OCI-LY7 (cell line): ENCODE measurements at regions of chr14 and their contacts with region 1.

Region 1: DNA sequence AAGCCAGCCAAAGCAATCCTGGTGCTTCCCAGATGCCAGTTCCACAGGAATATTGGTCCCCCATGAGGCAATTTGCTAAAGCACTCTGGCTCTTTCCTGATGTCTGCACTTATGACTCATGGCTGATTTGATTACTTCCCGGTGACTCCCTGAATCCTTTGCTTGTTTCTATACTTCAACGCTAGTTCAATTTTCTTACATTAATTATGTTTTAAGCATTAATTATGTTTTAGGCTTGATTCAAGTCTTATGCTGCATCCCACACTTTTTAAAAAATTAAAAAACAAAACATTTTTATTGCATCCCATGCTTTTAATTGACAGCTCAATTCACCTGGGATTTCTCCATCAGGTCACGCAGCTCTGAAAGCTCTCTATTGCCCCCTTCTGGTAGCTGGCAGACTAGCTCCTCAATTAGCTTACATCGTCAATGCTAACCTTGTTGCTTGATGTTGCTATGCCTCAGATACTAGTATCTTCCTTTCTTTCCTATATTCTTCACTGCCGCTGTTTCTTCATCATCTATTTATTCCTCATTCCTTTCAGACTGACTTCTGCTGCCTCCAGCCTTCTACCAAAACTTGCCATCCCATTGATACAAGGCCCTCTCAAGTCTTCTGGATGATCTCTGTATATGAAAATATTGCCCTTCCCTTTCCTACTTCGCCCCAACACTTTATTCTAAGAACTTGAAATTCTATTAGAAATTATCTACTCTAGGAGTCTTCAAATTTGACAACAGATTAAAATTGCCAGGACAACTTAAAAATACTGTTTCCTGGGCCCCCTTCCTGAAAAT is 32.0 kb downstream of the TSHR start:
- DNase-seq: peak; percentile 89
- H3K4me3 ChIP-seq: no peak overlapping the region
- H3K27ac ChIP-seq: peak overlapping the region; percentile 13
- H3K4me1 ChIP-seq: peaks cover 50% of the 10 kb centered on the region
- CTCF ChIP-seq: peak; percentile 98

Region 2: DNA sequence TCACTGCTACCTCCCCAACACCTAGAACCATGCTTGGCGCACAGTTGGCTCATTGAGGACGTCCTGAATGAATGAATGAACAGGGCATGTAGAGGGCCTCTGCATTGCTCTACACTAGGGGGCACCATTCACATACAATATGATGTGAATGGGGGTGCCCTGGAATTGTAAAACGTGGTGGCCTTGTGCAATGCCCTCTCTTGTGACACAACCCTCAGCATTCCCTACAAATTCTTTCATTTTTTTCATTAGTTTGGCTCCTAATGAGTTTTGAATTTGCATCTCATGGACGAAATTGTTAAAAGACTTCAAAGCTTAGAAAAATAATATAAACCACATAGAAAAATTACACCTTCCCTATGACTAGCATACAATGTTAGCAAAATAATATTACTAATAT is 773.8 kb before region 1 on chr14:
- CTCF ChIA-PET with region 1: no interaction called
- POLR2A ChIA-PET with region 1: no interaction called
- intact Hi-C with region 1: loop called (anchors 10 kb)
- DNase-seq: peak; percentile 49
- H3K4me3 ChIP-seq: no peak overlapping the region
- H3K27ac ChIP-seq: no peak overlapping the region
- H3K4me1 ChIP-seq: no peaks in the 10 kb centered on the region
- CTCF ChIP-seq: peak; percentile 76

Region 3: GRCh38 chr14:80850197-80850814 is 137.1 kb before region 1 on chr14:
- CTCF ChIA-PET with region 1: no interaction called
- POLR2A ChIA-PET with region 1: no interaction called
- intact Hi-C with region 1: loop called (anchors 10 kb)
- DNase-seq: peak; percentile 41
- H3K4me3 ChIP-seq: no peak overlapping the region
- H3K27ac ChIP-seq: no peak overlapping the region
- H3K4me1 ChIP-seq: no peaks in the 10 kb centered on the region
- CTCF ChIP-seq: peak; percentile 91

Region 4: GRCh38 chr14:80954687-80955299 is 32.6 kb before region 1 on chr14:
- CTCF ChIA-PET with region 1: interaction called, 30 read pairs
- POLR2A ChIA-PET with region 1: interaction called, 267 read pairs
- intact Hi-C with region 1: loop called (anchors 1 kb)
- DNase-seq: peak; percentile 88
- H3K4me3 ChIP-seq: peak overlapping the region; percentile 68
- H3K27ac ChIP-seq: peak overlapping the region; percentile 98
- H3K4me1 ChIP-seq: peaks cover 47% of the 10 kb centered on the region
- CTCF ChIP-seq: peak; percentile 94

Region 5: GRCh38 chr14:80973931-80974641 is 13.3 kb before region 1 on chr14:
- CTCF ChIA-PET with region 1: interaction called, 9 read pairs
- POLR2A ChIA-PET with region 1: interaction called, 15 read pairs
- intact Hi-C with region 1: no loop called
- DNase-seq: no peak
- H3K4me3 ChIP-seq: no peak overlapping the region
- H3K27ac ChIP-seq: no peak overlapping the region
- H3K4me1 ChIP-seq: peaks cover 53% of the 10 kb centered on the region
- CTCF ChIP-seq: no peak

Region 6: DNA sequence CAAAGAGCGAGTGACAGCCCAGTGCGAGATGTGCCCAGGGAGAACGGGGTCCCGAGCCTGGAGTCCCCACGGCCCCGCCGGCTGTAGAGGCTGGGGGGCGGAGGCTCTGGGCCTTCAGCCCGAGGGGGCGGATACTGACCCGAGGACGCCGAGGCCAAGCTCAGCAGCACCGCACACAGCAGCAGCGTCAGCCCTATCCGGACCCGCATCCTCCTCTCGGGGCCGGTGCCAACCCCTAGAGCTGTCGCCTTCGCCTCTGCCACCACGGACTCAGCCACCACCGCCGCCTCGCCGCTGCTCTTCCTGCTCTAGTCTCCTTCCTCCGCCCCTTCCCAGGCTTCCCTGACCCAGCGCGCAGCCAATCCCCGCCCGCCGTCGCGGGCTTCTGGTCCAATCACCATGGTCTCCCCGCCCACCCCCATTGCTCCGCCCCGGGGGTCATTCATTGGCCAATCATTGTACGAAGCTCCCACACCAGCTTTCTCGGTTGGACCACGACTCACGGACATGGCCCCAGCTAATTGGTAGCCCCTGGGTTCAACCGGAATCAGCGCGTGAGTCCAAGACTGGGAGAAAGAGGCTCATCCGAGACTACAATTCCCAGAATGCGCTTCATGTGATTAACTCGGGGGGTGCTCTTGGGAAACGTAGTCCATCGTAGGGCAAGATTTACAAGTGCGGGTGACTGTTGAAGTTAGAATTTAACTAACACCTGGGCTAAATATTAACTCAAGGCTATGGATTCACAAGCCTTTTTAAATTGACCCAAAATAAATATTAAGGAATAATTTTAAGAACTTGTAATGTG is 546.3 kb after region 1 on chr14 and contains the start of gene SEL1L:
- CTCF ChIA-PET with region 1: no interaction called
- POLR2A ChIA-PET with region 1: no interaction called
- intact Hi-C with region 1: loop called (anchors 5 kb)
- DNase-seq: peak; percentile 100
- H3K4me3 ChIP-seq: peak within 1 kb of the TSS; percentile 84
- H3K27ac ChIP-seq: no peak within 1 kb of the TSS
- H3K4me1 ChIP-seq: peaks cover 48% of the 10 kb centered on the region
- CTCF ChIP-seq: no peak
- total RNA-seq, gene SEL1L: 58.3 and 68.8 TPM in 2 replicates

Region 7: DNA sequence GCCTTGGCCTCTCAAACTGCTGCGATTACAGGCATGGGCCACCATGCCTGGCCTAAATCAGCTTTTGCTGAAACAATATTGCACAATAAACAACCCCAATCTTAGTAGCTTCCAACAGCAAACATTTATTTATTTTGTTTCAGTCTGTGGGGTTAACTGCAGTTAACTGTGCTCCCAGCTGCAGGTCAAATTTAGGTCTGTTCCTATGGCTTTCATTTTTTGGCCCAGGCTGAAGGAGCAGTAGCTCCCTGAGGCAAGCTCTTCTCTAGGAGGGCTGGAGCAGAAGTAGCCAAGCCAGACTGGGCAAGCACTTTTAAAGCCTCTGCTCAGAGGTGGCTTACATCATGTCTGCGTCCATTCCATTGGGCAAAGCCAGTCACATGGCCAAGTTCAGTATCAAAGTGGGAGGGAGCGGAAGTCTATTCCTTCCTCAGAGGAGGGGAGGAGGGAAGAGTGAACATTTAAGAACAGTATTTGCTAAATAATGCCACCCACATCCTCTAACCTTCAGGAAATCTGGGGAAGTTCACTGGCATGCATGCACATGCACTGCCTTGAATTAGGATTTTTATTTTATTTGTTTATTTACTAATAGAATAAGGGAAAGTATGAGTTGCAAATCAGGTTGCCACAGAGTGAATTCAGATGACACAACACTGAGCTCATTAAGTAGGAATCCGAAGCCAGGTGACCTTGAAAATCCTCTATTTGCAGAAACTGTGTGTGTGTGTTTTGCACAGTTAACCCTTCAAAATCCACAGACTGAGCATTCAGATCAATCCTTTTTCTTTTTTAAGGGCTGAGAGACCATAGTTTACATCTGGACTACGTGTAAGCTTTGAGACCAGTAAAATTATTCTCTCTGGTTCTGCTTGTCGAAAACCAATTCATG is 668.2 kb after region 1 on chr14:
- CTCF ChIA-PET with region 1: no interaction called
- POLR2A ChIA-PET with region 1: no interaction called
- intact Hi-C with region 1: no loop called
- DNase-seq: peak; percentile 10
- H3K4me3 ChIP-seq: no peak overlapping the region
- H3K27ac ChIP-seq: no peak overlapping the region
- H3K4me1 ChIP-seq: no peaks in the 10 kb centered on the region
- CTCF ChIP-seq: no peak